Left cardiac atrium (tissue), 4 donors: ENCODE measurements at regions of chr3 and their contacts with region 1.

Region 1: DNA sequence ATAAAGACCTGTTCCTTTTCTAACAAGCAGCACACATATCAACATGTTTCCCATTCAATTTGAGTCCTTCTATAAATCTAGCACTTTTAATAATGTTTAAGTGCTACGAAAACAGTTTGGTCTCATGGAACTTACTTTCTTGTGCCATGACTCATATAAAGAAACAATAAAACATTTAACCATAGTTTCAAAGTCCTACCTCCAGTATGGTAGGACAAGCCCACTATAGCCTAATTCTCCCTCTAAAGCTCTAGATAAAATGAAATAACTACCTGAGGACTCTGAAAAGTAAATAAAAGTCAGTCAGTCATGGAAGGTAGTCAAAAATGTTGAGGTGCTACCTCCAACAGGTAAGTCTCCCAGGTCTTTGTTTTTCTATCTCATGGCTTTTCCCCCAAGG is 12.0 kb upstream of the PIK3CA start:
- DNase-seq: no peak
- ATAC-seq: no peak

Region 2: GRCh38 chr3:178996399-178996798 is 139.8 kb before region 1 on chr3:
- intact Hi-C with region 1: no loop called
- DNase-seq: no peak
- ATAC-seq: no peak

Region 3: GRCh38 chr3:179299999-179300613 is 163.9 kb after region 1 on chr3:
- intact Hi-C with region 1: loop called in 1 of 2 experiments (anchors 5 kb)
- DNase-seq: no peak
- ATAC-seq: no peak